Pancreas (tissue), 10 donors: ENCODE measurements at regions of chr6 and their contacts with region 1.

Region 1: GRCh38 chr6:157873735-157874344 is 50.8 kb downstream of the SNX9 start:
- DNase-seq: peak; percentile 48 to 93 (median 77)
- ATAC-seq: peak; percentile 79 to 91 (median 90)
- H3K4me3 ChIP-seq: no peak overlapping the region
- H3K27ac ChIP-seq: no peak overlapping the region
- H3K4me1 ChIP-seq: peaks cover 0 to 5% (median 4%) of the 10 kb centered on the region in 3 donors
- H3K27me3 ChIP-seq: no peaks in the 10 kb centered on the region
- CTCF ChIP-seq: peak; percentile 59 to 76 (median 72)

Region 2: GRCh38 chr6:157756708-157757429 is 117.0 kb before region 1 on chr6:
- intact Hi-C with region 1: loop called in 2 of 3 experiments (anchors 5 to 10 kb)
- DNase-seq: peak; percentile 77 to 91 (median 88)
- ATAC-seq: peak; percentile 91 to 98 (median 96)
- H3K4me3 ChIP-seq: no peak overlapping the region
- H3K27ac ChIP-seq: no peak overlapping the region
- H3K4me1 ChIP-seq: no peaks in the 10 kb centered on the region
- H3K27me3 ChIP-seq: no peaks in the 10 kb centered on the region
- CTCF ChIP-seq: peak; percentile 64 to 81 (median 68)

Region 3: DNA sequence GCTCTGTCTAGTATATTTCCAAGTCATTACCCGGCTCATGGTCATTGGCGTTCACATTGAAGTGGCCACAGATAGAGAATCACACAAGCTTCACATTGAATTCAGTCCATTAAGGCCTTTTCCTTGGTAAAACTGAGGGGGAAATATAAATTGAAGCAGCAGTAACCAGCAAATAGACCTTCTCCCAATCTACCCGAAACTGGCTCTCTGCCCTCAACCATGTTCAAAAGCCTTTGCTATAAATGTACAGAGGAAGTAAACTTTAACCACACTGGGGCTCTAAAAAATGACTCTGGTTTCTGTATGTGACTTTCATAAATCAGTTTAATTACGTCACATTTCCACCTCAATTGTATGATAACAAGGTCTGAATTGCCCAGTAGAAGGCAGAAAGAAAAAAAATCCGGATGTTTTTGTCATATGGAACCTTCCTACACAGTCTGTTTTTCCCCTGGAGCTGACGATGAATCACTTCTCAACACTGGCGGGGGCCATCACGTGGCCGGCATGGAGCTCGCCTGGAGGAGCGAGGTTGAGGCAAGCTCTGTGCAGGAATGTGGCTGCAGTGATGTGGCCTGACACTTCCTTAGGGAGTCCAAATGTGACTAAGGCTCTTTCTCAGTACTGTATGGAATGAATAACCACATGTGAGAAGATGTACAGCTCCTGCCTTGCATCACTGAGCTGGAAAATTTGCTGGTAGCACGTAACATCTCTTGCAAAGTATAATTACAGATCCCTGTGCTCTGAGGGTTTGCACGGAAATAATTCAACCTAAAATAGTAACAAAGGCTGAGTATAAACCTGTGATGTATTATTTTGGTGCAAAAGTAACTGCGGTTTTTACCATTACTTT is 109.4 kb before region 1 on chr6:
- intact Hi-C with region 1: loop called in 2 of 3 experiments (anchors 5 to 10 kb)
- DNase-seq: peak in 5 of 6 donors; percentile 32 to 79 (median 45)
- ATAC-seq: peak; percentile 16 to 79 (median 50)
- H3K4me3 ChIP-seq: no peak overlapping the region
- H3K27ac ChIP-seq: peak overlapping the region; percentile 39 to 82 (median 62)
- H3K4me1 ChIP-seq: peaks cover 10 to 19% (median 17%) of the 10 kb centered on the region in 3 donors
- H3K27me3 ChIP-seq: no peaks in the 10 kb centered on the region
- CTCF ChIP-seq: no peak